ENCODE measurements at regions of chr4 and their contacts with region 1.

Region 1: GRCh38 chr4:26410385-26411293 is 79.6 kb downstream of the CCKAR start:
- DNase-seq: no peak
- ATAC-seq: peak; percentile 47

Region 2: GRCh38 chr4:26088433-26088928 is 322.2 kb before region 1 on chr4:
- intact Hi-C with region 1: loop called (anchors 5 kb)
- DNase-seq: no peak
- ATAC-seq: peak; percentile 31

Region 3: DNA sequence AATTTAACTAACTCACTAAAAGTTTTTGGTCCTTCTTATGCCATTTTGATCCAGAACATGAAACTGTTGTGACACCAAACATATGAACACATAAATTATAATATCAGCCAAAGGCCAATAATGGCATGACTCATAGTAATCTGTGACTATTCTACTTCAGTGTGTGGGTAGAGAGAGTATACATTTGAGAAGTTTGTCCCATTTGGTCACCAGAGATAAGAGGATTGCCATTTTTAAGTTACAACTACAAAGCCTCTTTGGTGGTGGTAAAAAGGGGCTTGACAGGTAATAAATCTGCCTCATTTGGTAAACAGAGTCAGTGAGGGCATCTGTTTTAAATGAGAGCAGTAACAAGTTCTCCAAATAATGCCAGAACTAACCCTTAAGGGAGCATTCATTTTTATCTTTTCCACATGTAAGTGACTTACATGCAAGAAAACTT is 291.2 kb after region 1 on chr4:
- intact Hi-C with region 1: no loop called
- DNase-seq: no peak
- ATAC-seq: no peak